Activated CD4-positive, alpha-beta memory T cell treated with anti-CD3 and anti-CD28 coated beads, Interleukin-2, amount 10 ng/mL, durations not matched to agents 7 days and 5 days (primary cell): ENCODE measurements at regions of chr3 and their contacts with region 1.

Region 1: GRCh38 chr3:167691366-167691765 is 37.6 kb upstream of the WDR49 start:
- DNase-seq: peak; percentile 53
- H3K4me3 Mint-ChIP-seq: no peak overlapping the region
- H3K27ac Mint-ChIP-seq: peak overlapping the region; percentile 56
- H3K4me1 Mint-ChIP-seq: peaks cover 22% of the 10 kb centered on the region
- H3K27me3 Mint-ChIP-seq: no peaks in the 10 kb centered on the region

Region 2: GRCh38 chr3:167734498-167735232 is 43.3 kb after region 1 on chr3 and contains the start of gene PDCD10:
- CTCF ChIA-PET with region 1: interaction called, 4 read pairs
- POLR2A ChIA-PET with region 1: interaction called, 14 read pairs
- DNase-seq: peak; percentile 98
- H3K4me3 Mint-ChIP-seq: no peak within 1 kb of the TSS
- H3K27ac Mint-ChIP-seq: no peak within 1 kb of the TSS
- H3K4me1 Mint-ChIP-seq: peaks cover 26% of the 10 kb centered on the region
- H3K27me3 Mint-ChIP-seq: no peaks in the 10 kb centered on the region
- total RNA-seq, gene PDCD10: 68.3 to 71.9 TPM

Region 3: GRCh38 chr3:168024537-168024941 is 333.2 kb after region 1 on chr3:
- CTCF ChIA-PET with region 1: no interaction called
- POLR2A ChIA-PET with region 1: no interaction called
- DNase-seq: peak; percentile 40
- H3K4me3 Mint-ChIP-seq: no peak overlapping the region
- H3K27ac Mint-ChIP-seq: peak overlapping the region; percentile 76
- H3K4me1 Mint-ChIP-seq: peaks cover 46% of the 10 kb centered on the region
- H3K27me3 Mint-ChIP-seq: no peaks in the 10 kb centered on the region